ENCODE measurements at regions of chr10 and their contacts with region 1.

Region 1: GRCh38 chr10:12264204-12264940 is 68.4 kb downstream of the CDC123 start:
- DNase-seq: peak in 1 of 2 donors; percentile 85
- H3K4me3 ChIP-seq: peak overlapping the region; percentile 12 to 56
- H3K27ac ChIP-seq: peak overlapping the region in 1 of 2 donors; percentile 54
- H3K4me1 ChIP-seq: no peaks in the 10 kb centered on the region
- H3K27me3 ChIP-seq: no peaks in the 10 kb centered on the region
- CTCF ChIP-seq: peak; percentile 86 to 96 (median 92)

Region 2: DNA sequence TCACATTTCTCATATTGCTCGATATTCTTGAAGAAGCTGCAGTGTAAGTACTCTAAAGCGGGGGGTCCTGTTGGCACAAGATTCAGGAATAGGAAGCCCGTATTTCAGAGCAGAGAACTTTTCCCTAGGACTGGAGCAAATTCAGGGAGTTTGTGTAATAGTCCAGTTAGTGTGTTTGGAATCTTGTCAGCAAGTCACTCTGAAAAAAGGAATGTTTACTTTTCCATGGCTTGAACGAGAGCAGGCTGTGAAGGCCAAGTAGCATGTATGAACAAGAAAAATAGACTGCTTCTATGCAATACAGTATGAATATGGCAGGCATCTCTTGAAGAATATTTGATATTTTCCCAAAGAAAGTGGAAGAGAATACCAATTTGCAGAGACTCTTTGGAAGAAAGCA is 28.6 kb before region 1 on chr10:
- intact Hi-C with region 1: no loop called
- DNase-seq: no peak
- H3K4me3 ChIP-seq: peak overlapping the region in 1 of 2 donors; percentile 5
- H3K27ac ChIP-seq: peak overlapping the region; percentile 69 to 84
- H3K4me1 ChIP-seq: peaks cover 0 to 14% of the 10 kb centered on the region in 2 donors
- H3K27me3 ChIP-seq: no peaks in the 10 kb centered on the region
- CTCF ChIP-seq: no peak

Region 3: DNA sequence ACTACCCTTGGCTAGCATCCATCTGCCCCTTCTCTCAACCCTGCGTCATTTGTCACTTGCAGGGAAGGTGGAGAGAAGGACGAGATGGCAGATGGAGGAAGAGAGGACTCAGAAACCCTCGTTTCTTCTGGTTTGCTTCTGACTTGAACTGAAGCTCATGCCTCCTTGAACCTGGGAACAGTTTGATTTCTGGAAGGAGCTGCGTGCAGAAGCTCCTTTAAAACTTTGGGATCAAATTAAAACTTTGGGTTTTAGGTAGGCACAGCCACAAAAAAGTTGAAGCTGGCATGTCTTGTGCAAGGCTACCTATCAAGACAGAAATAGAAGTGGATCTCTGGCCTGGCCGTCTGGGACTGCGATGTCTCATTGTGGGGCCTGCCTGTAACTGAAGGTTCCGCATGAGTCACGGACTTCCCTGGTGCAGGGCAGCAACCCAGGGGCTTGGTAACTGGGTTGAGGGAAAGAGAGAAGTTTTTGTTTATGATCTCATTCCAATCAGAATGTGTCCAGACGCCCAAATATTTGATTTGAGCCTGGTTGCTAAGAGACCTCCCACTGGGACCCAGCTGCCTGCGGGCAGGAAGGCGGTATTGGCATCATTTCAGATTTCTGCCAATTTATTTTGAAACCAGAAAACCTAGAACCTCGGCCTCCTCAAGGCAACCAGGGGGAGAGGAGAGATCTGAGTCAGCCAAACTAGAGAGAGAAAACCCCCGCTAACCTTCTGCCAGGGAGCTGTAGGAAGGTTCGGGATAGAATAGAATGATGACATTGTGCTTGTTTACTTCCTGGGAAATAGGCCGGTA is 69.2 kb after region 1 on chr10:
- intact Hi-C with region 1: loop called (anchors 5 kb)
- DNase-seq: peak; percentile 80 to 96
- H3K4me3 ChIP-seq: peak overlapping the region in 1 of 2 donors; percentile 30
- H3K27ac ChIP-seq: peak overlapping the region; percentile 85 to 86
- H3K4me1 ChIP-seq: peaks cover 0 to 18% of the 10 kb centered on the region in 2 donors
- H3K27me3 ChIP-seq: no peaks in the 10 kb centered on the region
- CTCF ChIP-seq: no peak

Region 4: GRCh38 chr10:12579954-12580858 is 315.8 kb after region 1 on chr10:
- intact Hi-C with region 1: loop called (anchors 10 kb)
- DNase-seq: no peak
- H3K4me3 ChIP-seq: peak overlapping the region in 1 of 2 donors; percentile 11
- H3K27ac ChIP-seq: peak overlapping the region; percentile 55 to 73
- H3K4me1 ChIP-seq: peaks cover 0 to 6% of the 10 kb centered on the region in 2 donors
- H3K27me3 ChIP-seq: no peaks in the 10 kb centered on the region
- CTCF ChIP-seq: no peak

Region 5: GRCh38 chr10:12710594-12711349 is 446.4 kb after region 1 on chr10:
- intact Hi-C with region 1: loop called (anchors 1 kb)
- DNase-seq: peak in 1 of 2 donors; percentile 88
- H3K4me3 ChIP-seq: no peak overlapping the region
- H3K27ac ChIP-seq: peak overlapping the region; percentile 82
- H3K4me1 ChIP-seq: peaks cover 15 to 39% of the 10 kb centered on the region in 2 donors
- H3K27me3 ChIP-seq: no peaks in the 10 kb centered on the region
- CTCF ChIP-seq: peak; percentile 87 to 94 (median 90)

Region 6: DNA sequence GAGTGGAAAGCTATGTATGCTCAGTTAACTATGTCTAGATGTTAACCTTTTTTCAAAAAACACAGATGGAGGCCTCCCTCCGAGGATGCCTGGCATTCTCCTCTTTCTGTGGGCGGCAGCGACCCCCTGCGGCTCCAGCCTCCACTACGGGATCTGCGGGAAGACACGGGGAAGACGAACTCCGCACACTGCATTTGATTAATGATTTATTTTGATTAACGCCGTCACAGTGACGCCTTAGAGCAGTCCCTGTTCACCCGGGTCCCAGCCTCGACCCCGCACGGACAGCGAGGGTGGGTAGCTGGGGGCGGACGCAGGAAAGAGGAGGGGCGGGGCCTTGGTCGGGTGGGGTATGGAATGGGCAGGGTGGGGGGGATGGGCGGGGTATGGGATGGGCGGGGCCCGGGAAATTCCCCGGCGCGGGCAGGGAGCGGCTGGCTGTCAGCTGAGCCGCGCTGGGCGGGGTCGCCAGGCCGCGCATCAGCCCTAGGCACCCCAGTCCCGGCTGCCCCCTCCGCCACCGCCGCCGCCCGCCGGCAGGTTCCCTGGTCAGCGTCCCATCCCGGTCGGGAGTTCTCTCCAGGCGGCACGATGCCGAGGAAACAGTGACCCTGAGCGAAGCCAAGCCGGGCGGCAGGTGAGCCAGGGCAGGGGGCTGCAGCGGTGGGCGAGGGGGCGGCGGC is 835.4 kb after region 1 on chr10 and contains the start of gene OPTN:
- intact Hi-C with region 1: loop called (anchors 2 kb)
- DNase-seq: peak; percentile 36 to 88
- H3K4me3 ChIP-seq: peak within 1 kb of the TSS; percentile 97 to 99
- H3K27ac ChIP-seq: peak within 1 kb of the TSS; percentile 96 to 99
- H3K4me1 ChIP-seq: peaks cover 2 to 7% of the 10 kb centered on the region in 2 donors
- H3K27me3 ChIP-seq: no peaks in the 10 kb centered on the region
- CTCF ChIP-seq: peak; percentile 77 to 88 (median 85)
- total RNA-seq, gene OPTN: 48.5 TPM